CD4-positive, alpha-beta memory T cell (primary cell): ENCODE measurements at regions of chr16 and their contacts with region 1.

Region 1: DNA sequence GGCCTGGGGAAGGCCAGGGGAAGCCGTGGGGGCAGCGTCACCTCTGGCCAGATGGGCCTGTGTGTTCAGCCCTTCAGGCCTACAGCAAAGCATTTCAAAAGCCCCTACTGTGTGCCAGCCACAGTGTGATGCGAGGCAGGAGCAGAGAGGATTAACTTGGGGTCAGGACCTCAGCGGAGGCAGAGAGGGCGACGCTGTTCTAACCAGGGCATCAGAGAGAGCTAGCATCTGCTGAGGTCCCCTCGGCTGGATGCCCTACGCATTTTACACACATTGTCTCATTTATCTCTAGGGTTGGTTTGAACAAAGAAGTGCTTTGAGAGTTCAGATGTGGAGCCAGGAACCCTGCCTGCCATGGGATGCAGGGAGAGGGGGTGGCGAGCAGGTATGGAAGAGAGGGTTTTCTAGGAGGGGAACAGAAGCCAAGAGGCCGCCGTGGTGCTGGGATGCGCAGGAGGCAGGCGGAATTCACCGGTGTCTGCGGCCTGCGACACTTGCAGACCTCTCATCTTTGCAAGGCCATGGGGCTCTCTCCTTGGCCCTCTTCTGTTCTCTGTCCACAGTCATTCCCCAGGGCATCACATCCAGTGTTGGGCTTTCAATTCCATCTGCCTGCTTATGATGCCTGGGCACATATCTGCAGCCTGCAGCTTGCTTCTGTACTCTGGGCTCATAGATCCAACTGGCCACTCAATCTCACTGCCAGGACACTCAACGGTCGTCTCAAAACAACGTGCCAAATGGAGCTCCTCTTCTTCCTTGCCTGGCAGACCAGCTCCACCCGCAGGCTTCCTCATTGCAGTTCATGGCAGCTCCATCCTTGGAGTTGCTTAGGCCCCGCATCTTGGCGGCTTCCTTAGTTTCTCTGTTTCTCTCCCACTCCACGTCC is 8.1 kb upstream of the NKD1 start:
- DNase-seq: no peak
- H3K4me3 ChIP-seq: no peak overlapping the region
- H3K4me3 Mint-ChIP-seq: no peak overlapping the region
- H3K27ac ChIP-seq: no peak overlapping the region
- H3K27ac Mint-ChIP-seq: peak overlapping the region in 2 of 7 donors; percentile 17 to 78
- H3K4me1 ChIP-seq: no peaks in the 10 kb centered on the region
- H3K4me1 Mint-ChIP-seq: peaks cover 0 to 2% (median 0%) of the 10 kb centered on the region in 4 donors
- H3K27me3 ChIP-seq: no peaks in the 10 kb centered on the region
- H3K27me3 Mint-ChIP-seq: peaks cover 0 to 2% of the 10 kb centered on the region in 2 donors

Region 2: GRCh38 chr16:50428116-50428515 is 112.0 kb before region 1 on chr16:
- CTCF ChIA-PET with region 1: no interaction called
- POLR2A ChIA-PET with region 1: no interaction called
- intact Hi-C with region 1: no loop called
- DNase-seq: no peak
- H3K4me3 ChIP-seq: no peak overlapping the region
- H3K4me3 Mint-ChIP-seq: no peak overlapping the region
- H3K27ac ChIP-seq: no peak overlapping the region
- H3K27ac Mint-ChIP-seq: no peak overlapping the region
- H3K4me1 ChIP-seq: no peaks in the 10 kb centered on the region
- H3K4me1 Mint-ChIP-seq: no peaks in the 10 kb centered on the region
- H3K27me3 ChIP-seq: peaks cover 5% of the 10 kb centered on the region
- H3K27me3 Mint-ChIP-seq: peaks cover 7 to 25% of the 10 kb centered on the region in 2 donors

Region 3: GRCh38 chr16:50489182-50489581 is 50.9 kb before region 1 on chr16:
- CTCF ChIA-PET with region 1: no interaction called
- POLR2A ChIA-PET with region 1: no interaction called
- intact Hi-C with region 1: loop called (anchors 5 kb)
- DNase-seq: no peak
- H3K4me3 ChIP-seq: no peak overlapping the region
- H3K4me3 Mint-ChIP-seq: no peak overlapping the region
- H3K27ac ChIP-seq: no peak overlapping the region
- H3K27ac Mint-ChIP-seq: no peak overlapping the region
- H3K4me1 ChIP-seq: no peaks in the 10 kb centered on the region
- H3K4me1 Mint-ChIP-seq: no peaks in the 10 kb centered on the region
- H3K27me3 ChIP-seq: no peaks in the 10 kb centered on the region
- H3K27me3 Mint-ChIP-seq: peaks cover 9 to 14% of the 10 kb centered on the region in 2 donors